ENCODE measurements at regions of chr1 and their contacts with region 1.

Region 1: DNA sequence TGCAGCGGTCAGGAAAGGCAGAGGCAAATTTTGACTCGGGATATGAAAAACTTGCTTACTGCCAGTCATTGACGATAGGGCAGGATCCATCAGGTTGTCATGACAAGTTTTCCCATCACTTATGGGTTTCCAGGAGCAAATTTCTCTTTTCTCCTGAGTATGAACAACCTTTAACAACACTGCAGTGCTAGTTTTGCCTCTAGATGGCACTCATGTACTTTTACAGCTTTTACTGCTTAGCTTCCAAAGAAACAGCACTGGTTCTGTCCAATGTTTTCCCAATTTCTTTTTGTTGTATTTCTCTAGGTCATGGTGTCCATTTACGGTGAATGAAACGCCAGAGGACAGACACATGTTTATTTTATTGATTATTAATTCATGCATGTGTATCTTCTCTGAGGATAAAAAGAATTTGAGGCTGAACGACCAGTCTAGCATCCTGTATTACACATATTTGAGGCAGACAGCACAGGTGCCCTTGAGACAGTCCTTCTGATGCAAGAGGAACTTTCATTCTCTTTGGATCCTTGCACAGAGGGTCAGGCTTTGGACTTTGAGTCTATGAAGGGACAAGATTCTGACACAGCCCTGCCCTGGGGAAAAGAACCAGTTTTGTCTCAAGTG is 112.3 kb upstream of the TRABD2B start:
- DNase-seq: no peak
- ATAC-seq: no peak
- H3K4me3 ChIP-seq: no peak overlapping the region
- H3K27ac ChIP-seq: no peak overlapping the region
- H3K4me1 ChIP-seq: no peaks in the 10 kb centered on the region
- H3K27me3 ChIP-seq: no peaks in the 10 kb centered on the region

Region 2: DNA sequence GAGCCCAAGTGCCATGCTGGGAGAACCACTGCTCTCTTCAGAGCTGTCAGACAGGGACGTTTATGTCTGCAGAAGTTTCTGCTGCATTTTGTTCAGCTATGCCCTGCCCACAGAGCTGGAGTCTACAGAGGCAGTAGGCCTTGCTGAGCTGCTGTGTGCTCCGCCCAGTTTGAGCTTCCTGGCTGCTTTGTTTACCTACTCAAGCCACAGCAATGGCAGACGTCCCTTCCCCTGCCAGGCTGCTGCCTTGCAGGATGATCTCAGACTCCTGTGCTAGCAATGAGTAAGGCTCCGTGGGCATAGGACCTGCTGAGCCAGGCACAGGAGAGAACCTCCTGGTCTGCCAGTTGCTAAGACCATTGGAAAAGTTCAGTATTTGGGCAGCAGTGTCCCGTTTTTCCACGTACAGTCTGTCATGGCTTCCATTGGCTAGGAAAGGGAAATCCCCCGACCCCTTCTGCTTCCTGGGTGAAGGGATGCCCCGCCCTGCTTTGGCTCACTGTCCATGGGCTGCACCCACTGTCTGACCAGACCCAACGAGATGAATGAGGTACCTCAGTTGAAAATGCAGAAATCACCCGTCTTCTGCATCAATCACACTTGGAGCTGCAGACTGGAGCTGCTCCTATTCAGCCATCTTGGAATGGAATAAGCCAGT is 1278.7 kb before region 1 on chr1:
- intact Hi-C with region 1: no loop called
- DNase-seq: no peak
- ATAC-seq: no peak
- H3K4me3 ChIP-seq: no peak overlapping the region
- H3K27ac ChIP-seq: no peak overlapping the region
- H3K4me1 ChIP-seq: no peaks in the 10 kb centered on the region
- H3K27me3 ChIP-seq: no peaks in the 10 kb centered on the region

Region 3: DNA sequence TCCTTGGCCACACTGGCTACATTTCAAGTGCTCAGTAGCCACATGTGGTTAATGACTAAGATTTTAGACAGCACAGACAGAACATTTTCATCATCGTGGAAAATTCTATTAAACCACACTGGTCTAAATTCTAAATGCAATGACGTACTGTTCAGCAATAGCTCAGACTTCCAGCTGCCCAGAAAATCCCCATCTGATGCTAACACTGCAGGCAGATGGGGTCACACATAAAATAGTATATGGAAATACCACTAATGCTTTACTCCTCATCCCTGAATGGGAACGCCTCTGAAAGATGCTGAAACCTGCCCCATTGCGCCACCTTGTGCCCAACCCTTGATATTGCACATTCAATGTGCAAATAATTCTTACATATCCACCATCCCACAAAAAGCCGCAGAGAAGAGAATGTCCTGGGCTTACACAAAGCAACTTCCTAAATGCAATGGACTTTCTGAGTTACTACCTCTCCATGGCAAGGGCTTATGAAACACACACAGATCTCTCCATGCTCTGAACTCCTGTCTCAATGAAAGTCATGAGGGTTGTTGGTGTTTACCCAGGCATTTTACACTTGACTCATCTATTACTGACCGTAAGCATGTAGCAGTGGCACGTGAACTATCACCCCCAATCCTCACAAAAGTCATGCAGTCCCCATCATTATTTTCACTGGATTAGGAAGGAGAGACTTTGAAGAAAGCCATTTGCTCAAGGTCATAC is 92.7 kb after region 1 on chr1:
- intact Hi-C with region 1: loop called (anchors 2 to 5 kb)
- DNase-seq: peak; percentile 76 to 91
- ATAC-seq: peak; percentile 92
- H3K4me3 ChIP-seq: no peak overlapping the region
- H3K27ac ChIP-seq: no peak overlapping the region
- H3K4me1 ChIP-seq: no peaks in the 10 kb centered on the region
- H3K27me3 ChIP-seq: no peaks in the 10 kb centered on the region

Region 4: DNA sequence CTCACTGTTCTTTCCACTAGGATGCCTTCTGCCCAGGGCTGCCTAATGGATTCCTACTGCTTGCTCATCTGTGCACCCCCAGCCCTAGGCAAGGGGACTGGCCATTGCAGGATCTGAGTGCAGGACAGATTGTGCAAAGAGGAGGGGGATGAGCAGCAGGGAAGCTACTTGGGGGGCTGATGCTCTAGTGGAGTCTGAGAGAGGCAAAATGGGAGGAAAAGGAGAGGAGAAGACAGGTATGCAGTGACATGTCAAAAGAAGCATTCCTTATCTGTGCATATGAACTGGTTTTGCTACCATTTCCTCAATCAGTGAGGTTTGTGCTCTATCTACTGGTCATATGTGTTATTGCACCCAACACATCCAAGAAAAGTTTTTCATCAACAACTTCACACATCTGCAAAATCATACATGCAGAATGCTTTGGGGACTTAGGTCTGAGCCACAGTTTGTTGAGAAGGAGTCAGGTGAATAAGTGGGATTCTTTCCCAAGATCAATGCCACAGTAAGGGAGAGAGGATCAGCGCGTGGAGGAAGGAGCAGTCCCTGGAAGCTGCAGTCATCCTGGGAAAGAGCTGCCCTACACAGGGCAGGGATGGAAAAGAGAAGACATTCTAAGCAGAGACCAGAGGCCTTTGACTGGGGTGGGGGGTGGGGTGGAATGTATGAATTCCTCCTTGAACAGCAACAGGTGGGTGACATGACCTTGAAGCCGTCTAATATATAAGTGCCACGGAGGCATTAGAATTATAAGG is 127.4 kb after region 1 on chr1:
- intact Hi-C with region 1: loop called (anchors 2 to 10 kb)
- DNase-seq: no peak
- ATAC-seq: no peak
- H3K4me3 ChIP-seq: no peak overlapping the region
- H3K27ac ChIP-seq: no peak overlapping the region
- H3K4me1 ChIP-seq: no peaks in the 10 kb centered on the region
- H3K27me3 ChIP-seq: no peaks in the 10 kb centered on the region

Region 5: DNA sequence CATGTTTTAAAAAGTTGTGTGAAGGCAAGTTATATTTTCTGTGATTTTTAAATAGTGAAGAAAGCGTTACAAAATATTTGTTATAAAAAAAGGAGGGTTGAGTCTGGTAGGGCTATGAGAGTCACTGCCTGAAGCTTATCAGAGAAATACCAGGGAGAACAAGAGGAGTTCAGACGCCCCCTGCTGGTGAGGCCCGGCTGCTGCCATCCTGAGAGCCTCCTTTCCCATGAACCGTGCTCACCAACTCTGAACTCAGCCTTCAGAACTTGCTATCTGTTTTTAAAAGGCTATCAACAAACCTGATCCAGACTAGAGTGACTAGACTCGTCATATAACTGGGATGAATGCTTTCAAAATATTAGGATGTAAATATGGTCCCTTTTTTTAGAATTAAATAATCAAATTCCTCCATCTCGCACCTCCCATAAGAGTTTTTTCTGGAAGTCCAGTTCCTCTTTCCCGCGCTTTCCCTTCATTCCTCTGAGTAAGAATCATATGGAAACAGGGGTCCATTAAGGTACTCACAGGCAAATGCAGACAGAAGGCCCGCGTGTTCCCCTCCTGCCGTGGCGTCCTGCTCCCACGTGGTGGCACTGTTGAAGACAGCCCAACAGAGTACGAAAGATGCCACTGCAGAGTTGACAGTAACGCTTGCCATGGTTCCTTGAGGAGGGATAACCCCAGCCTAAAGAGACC is 388.7 kb after region 1 on chr1:
- intact Hi-C with region 1: loop called (anchors 1 to 5 kb)
- DNase-seq: peak; percentile 85 to 93
- ATAC-seq: peak; percentile 91
- H3K4me3 ChIP-seq: no peak overlapping the region
- H3K27ac ChIP-seq: no peak overlapping the region
- H3K4me1 ChIP-seq: peaks cover 0 to 2% of the 10 kb centered on the region in 2 donors
- H3K27me3 ChIP-seq: no peaks in the 10 kb centered on the region